WTC11 (cell line): ENCODE measurements at regions of chr10 and their contacts with region 1.

Region 1: DNA sequence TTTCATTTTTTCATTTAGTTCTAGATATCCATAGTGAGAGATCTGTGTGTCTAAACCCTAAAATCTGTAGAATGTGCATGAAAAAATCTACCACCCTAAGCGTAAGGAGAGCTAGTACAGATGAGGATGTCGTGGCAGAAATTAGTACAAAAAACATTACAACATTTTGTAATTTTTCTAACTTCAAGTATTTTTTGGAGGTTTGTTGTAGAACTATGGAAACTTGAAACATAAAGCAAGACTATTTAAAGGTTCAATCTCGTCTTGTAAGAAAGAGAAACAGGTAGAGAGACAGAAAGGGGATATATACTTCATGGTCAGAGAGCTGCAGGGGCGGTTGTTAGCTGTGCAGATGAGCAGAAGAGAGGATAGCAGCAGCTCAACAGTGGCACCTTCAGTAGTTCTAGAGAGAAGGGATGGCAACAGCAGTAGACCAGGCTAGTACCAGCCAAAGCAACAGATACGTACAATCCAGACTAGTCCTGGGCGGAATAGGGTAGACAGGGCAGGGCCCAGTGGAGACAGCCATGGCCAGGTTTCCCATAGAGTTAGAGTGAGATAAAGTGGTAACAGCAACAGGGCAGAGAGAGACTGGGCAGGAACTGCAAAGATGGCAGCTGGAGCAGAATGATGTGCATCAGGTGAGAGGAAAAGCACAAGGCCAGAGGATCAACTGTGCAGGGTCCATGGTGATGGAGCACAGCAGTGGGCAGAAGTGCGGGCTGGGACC is 145.2 kb downstream of the FRMD4A start:
- DNase-seq: peak; percentile 42
- ATAC-seq: peak; percentile 97
- H3K4me3 Mint-ChIP-seq: no peak overlapping the region
- H3K27ac Mint-ChIP-seq: peak overlapping the region; percentile 100
- H3K4me1 Mint-ChIP-seq: peaks cover 26% of the 10 kb centered on the region
- H3K27me3 Mint-ChIP-seq: no peaks in the 10 kb centered on the region; the same call in 1 of the 2 replicates
- CTCF ChIP-seq: no peak

Region 2: DNA sequence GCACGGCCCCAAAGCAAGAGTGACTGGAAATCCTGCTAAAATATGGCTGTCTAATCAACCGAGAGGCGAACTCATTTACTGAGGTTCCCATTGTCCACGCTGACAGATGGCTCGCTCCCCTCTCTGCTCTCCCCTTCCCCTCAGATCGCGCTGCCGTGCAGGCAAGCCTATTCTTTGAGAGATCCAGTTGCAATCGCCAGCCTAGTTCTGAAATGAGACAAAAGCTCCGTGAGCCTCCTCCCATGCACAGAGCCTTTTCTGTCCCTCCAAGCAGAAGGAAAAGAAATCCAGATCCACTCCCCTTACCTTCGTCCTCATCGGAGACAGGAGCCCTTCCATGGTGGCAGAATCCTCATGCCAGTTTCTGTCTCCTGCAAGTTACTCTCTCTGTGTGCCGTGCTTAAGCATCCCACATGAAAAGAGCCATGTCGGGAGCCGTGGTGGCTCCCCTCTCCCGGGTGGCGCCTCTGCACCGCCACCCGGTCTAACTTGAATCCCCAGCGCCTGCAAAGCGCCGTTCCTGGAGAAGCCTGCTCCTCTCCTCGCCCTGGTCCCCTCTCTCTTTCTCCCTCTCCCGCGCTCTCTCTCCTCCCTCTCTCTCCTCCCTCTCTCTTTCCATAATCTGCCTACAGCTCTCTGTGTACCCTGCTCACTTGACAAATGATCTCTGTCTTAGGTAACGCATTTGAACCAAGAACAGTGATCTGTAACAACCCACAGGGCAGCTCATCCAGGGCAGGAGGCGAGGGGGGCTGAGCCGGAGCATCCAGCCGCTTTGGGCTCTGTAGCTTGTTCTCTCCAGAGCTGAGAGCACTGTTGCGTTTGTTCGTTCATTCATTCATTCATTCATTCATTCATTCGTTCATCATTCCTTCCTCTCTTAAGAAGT is 11.5 kb before region 1 on chr10:
- CTCF ChIA-PET with region 1: interaction called, 11 read pairs
- POLR2A ChIA-PET with region 1: interaction called, 9 read pairs
- DNase-seq: peak; percentile 27
- ATAC-seq: peak; percentile 85
- H3K4me3 Mint-ChIP-seq: peak overlapping the region; percentile 85
- H3K27ac Mint-ChIP-seq: no peak overlapping the region
- H3K4me1 Mint-ChIP-seq: peaks cover 19% of the 10 kb centered on the region
- H3K27me3 Mint-ChIP-seq: peaks cover 30% of the 10 kb centered on the region
- CTCF ChIP-seq: no peak

Region 3: GRCh38 chr10:14478604-14479003 is 293.1 kb after region 1 on chr10:
- CTCF ChIA-PET with region 1: interaction called, 18 read pairs
- POLR2A ChIA-PET with region 1: interaction called, 5 read pairs
- DNase-seq: peak; percentile 58
- ATAC-seq: peak; percentile 94
- H3K4me3 Mint-ChIP-seq: no peak overlapping the region
- H3K27ac Mint-ChIP-seq: no peak overlapping the region; the same call in none of the 2 replicates
- H3K4me1 Mint-ChIP-seq: peaks cover 11% of the 10 kb centered on the region
- H3K27me3 Mint-ChIP-seq: no peaks in the 10 kb centered on the region
- CTCF ChIP-seq: peak; percentile 41; the same call in 1 of the 2 replicates